Activated CD4-positive, alpha-beta T cell treated with anti-CD3 and anti-CD28 coated beads for 36 hours (primary cell): ENCODE measurements at regions of chr6 and their contacts with region 1.

Region 1: DNA sequence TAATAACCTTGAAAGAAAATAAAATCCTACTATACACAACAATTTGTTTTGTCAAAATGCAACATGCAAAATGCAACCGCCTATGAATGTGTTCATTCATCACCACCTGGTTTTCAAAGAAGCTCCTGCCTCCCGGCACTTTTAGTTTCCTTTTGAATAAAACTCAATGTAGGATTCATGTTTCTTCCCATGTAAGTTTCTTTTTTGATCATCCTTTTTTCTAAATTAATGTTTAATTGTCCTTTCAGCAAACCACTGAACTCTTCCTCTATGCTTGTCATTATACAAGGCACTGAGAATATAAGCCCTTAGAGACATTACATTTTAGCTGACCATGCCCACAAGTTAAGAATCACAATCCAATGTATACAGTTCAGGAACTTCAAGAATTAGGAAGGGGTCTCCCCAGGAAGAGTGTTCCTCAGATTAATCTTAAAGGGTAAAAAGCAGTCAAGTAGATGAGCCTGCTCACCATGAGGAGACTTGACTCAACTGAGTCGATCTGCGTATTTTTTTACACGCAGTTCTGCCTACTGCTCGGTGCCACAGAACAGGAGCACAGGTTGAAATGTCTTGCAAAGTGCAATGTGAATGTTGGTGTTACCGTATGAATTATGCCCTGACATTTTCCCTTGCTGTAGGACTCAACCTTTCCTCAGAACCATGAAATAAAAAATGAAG is 7.2 kb upstream of the THEMIS start:
- DNase-seq: peak; percentile 61
- ATAC-seq: peak; percentile 83
- H3K4me3 Mint-ChIP-seq: peak overlapping the region; percentile 61
- H3K27ac Mint-ChIP-seq: peak overlapping the region; percentile 84
- H3K4me1 Mint-ChIP-seq: peaks cover 55% of the 10 kb centered on the region
- H3K27me3 Mint-ChIP-seq: no peaks in the 10 kb centered on the region

Region 2: GRCh38 chr6:127484212-127484858 is 423.8 kb before region 1 on chr6:
- CTCF ChIA-PET with region 1: no interaction called
- POLR2A ChIA-PET with region 1: no interaction called
- intact Hi-C with region 1: loop called in 1 of 2 experiments (anchors 10 kb)
- DNase-seq: no peak
- ATAC-seq: peak; percentile 93
- H3K4me3 Mint-ChIP-seq: peak overlapping the region; percentile 55
- H3K27ac Mint-ChIP-seq: peak overlapping the region; percentile 5
- H3K4me1 Mint-ChIP-seq: peaks cover 26% of the 10 kb centered on the region
- H3K27me3 Mint-ChIP-seq: peaks cover 20% of the 10 kb centered on the region

Region 3: DNA sequence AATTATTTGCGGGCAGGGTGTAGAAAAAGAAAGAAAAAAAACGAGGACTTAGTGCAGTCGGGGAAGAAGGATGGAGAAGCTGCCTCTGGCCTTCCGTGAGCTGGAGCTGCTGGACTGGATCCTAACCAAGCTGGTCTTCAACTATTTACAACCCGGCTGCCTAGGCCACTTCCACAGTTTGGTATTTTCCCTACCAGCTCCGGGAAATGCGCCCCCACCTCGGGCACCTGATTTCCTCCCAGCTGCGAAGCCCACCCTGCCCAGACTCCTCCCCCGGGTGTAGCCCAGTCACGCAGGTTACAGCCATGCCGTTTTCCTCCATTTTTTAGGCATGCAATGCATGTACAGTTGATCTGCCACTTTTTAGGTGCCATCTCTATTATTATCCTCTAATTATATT is 28.4 kb before region 1 on chr6:
- CTCF ChIA-PET with region 1: interaction called, 3 read pairs
- POLR2A ChIA-PET with region 1: no interaction called
- intact Hi-C with region 1: loop called in 1 of 2 experiments (anchors 2 kb)
- DNase-seq: peak; percentile 47
- ATAC-seq: peak; percentile 13
- H3K4me3 Mint-ChIP-seq: peak overlapping the region; percentile 65
- H3K27ac Mint-ChIP-seq: peak overlapping the region; percentile 76
- H3K4me1 Mint-ChIP-seq: peaks cover 78% of the 10 kb centered on the region
- H3K27me3 Mint-ChIP-seq: no peaks in the 10 kb centered on the region

Region 4: GRCh38 chr6:127893541-127893940 is 14.6 kb before region 1 on chr6:
- CTCF ChIA-PET with region 1: interaction called, 12 read pairs
- POLR2A ChIA-PET with region 1: no interaction called
- intact Hi-C with region 1: loop called in 1 of 2 experiments (anchors 1 kb)
- DNase-seq: peak; percentile 63
- ATAC-seq: peak; percentile 82
- H3K4me3 Mint-ChIP-seq: peak overlapping the region; percentile 77
- H3K27ac Mint-ChIP-seq: peak overlapping the region; percentile 96
- H3K4me1 Mint-ChIP-seq: peaks cover 58% of the 10 kb centered on the region
- H3K27me3 Mint-ChIP-seq: no peaks in the 10 kb centered on the region

Region 5: DNA sequence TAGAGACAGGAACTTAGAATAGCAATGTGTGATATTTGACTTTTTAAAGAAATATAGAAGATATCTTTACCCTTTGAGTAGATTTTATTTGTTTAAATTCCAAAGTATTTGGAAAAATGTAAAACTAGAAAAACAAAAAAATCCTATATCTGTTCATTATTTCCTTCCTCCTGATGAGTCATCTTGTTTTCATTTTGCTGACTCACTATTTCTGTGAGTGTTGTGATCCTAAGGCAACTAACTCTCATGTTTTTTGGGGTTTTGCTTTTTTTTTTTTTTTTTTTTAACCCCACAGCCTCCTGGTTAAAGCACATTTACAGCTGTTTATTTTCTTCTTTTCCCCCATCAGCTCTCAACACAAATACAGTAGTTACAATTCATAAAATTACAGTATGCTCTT is 30.6 kb after region 1 on chr6:
- CTCF ChIA-PET with region 1: interaction called, 3 read pairs
- POLR2A ChIA-PET with region 1: no interaction called
- intact Hi-C with region 1: loop called (anchors 1 to 5 kb)
- DNase-seq: no peak
- ATAC-seq: peak; percentile 15
- H3K4me3 Mint-ChIP-seq: no peak overlapping the region
- H3K27ac Mint-ChIP-seq: peak overlapping the region; percentile 48
- H3K4me1 Mint-ChIP-seq: peaks cover 47% of the 10 kb centered on the region
- H3K27me3 Mint-ChIP-seq: no peaks in the 10 kb centered on the region

Region 6: GRCh38 chr6:127951172-127951917 is 43.2 kb after region 1 on chr6:
- CTCF ChIA-PET with region 1: interaction called, 3 read pairs
- POLR2A ChIA-PET with region 1: no interaction called
- intact Hi-C with region 1: loop called in 1 of 2 experiments (anchors 1 kb)
- DNase-seq: no peak
- ATAC-seq: peak; percentile 68
- H3K4me3 Mint-ChIP-seq: peak overlapping the region; percentile 2
- H3K27ac Mint-ChIP-seq: peak overlapping the region; percentile 44
- H3K4me1 Mint-ChIP-seq: peaks cover 57% of the 10 kb centered on the region
- H3K27me3 Mint-ChIP-seq: no peaks in the 10 kb centered on the region